Heart right ventricle (tissue), 16 donors: ENCODE measurements at regions of chr11 and their contacts with region 1.

Region 1: GRCh38 chr11:59601788-59602187 is 13.8 kb downstream of the OSBP start:
- DNase-seq: no peak
- ATAC-seq: no peak
- H3K4me3 ChIP-seq: no peak overlapping the region
- H3K27ac ChIP-seq: no peak overlapping the region
- H3K4me1 ChIP-seq: no peaks in the 10 kb centered on the region
- H3K27me3 ChIP-seq: no peaks in the 10 kb centered on the region
- CTCF ChIP-seq: no peak

Region 2: GRCh38 chr11:59647245-59647980 is 45.6 kb after region 1 on chr11:
- intact Hi-C with region 1: loop called in 2 of 10 experiments (anchors 5 to 10 kb)
- DNase-seq: no peak
- ATAC-seq: no peak
- H3K4me3 ChIP-seq: no peak overlapping the region
- H3K27ac ChIP-seq: no peak overlapping the region
- H3K4me1 ChIP-seq: no peaks in the 10 kb centered on the region
- H3K27me3 ChIP-seq: no peaks in the 10 kb centered on the region
- CTCF ChIP-seq: no peak

Region 3: GRCh38 chr11:59659981-59660380 is 58.2 kb after region 1 on chr11:
- intact Hi-C with region 1: loop called in 1 of 10 experiments (anchors 10 kb)
- DNase-seq: no peak
- ATAC-seq: no peak
- H3K4me3 ChIP-seq: no peak overlapping the region
- H3K27ac ChIP-seq: peak overlapping the region in 1 of 10 donors; percentile 3
- H3K4me1 ChIP-seq: peaks cover 0 to 43% (median 19%) of the 10 kb centered on the region in 9 donors
- H3K27me3 ChIP-seq: no peaks in the 10 kb centered on the region
- CTCF ChIP-seq: no peak

Region 4: DNA sequence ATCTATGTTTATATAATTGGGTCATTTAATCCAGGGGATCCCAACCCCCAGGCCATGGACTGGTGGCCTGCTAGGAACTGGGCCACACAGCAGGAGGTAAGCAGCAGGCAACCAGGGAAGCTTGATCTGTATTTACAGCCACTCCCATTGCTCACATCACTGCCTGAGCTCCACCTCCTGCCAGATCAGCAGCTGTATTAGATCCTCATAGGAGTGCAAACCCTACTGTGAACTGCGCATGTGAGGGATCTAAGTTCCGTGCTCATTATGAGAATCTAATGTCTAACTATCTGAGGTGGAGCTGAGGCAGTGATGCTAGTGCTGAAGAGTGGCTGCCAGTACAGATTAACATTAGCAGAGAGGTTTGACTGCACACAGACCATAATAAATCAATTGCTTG is 519.5 kb after region 1 on chr11:
- intact Hi-C with region 1: no loop called
- DNase-seq: no peak
- ATAC-seq: no peak
- H3K4me3 ChIP-seq: no peak overlapping the region
- H3K27ac ChIP-seq: no peak overlapping the region
- H3K4me1 ChIP-seq: no peaks in the 10 kb centered on the region
- H3K27me3 ChIP-seq: no peaks in the 10 kb centered on the region
- CTCF ChIP-seq: no peak